CD4-positive, alpha-beta memory T cell (primary cell): ENCODE measurements at regions of chr15 and their contacts with region 1.

Region 1: GRCh38 chr15:76139368-76140073 is 79.7 kb downstream of the TMEM266 start:
- DNase-seq: peak; percentile 55 to 67 (median 60)
- H3K4me3 ChIP-seq: no peak overlapping the region
- H3K4me3 Mint-ChIP-seq: no peak overlapping the region
- H3K27ac ChIP-seq: no peak overlapping the region
- H3K27ac Mint-ChIP-seq: no peak overlapping the region
- H3K4me1 ChIP-seq: no peaks in the 10 kb centered on the region
- H3K4me1 Mint-ChIP-seq: peaks cover 0 to 5% (median under 1%) of the 10 kb centered on the region in 4 donors
- H3K27me3 ChIP-seq: no peaks in the 10 kb centered on the region
- H3K27me3 Mint-ChIP-seq: peaks cover 12 to 25% of the 10 kb centered on the region in 2 donors

Region 2: DNA sequence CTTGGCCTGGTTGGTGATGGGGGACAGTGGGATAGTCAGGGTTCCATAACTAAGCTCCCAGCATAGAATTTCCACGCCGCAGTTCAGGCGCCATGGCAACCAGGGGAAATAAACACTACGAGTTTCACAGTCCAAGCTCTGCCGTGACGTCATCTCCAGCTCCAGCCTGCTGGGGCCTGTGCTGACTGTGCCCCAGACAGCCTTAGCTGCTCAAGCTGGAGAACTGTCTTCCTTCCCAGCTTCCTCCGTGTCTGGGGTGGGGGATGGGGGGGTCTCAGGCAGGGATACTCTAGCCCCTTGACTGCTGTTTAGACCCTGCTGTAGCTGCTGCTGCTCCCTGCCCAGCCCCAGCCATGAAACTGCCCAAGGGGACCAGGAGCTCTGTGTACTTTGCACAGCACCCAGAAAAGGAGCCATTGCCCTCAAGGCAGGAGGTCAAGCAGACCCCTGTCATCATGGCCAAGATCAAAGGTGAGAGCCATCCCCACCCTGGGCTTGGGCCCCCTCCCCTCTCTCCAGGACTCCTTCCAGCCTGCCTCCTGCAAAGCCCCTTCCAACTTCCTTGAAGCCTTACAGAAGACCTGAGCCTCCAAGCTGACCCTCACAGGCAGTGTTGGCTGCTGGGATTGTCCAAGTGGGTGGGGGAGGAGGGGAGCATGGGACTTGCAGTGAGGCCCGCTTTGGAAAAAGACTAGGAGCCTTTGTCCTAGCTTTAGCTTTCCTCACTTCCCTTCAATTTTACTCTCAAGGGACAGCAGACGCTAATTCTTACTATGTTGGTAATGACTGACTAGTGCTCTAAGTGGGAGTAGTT is 415.5 kb before region 1 on chr15:
- CTCF ChIA-PET with region 1: interaction called, 3 read pairs
- POLR2A ChIA-PET with region 1: no interaction called
- intact Hi-C with region 1: loop called (anchors 2 kb)
- DNase-seq: peak; percentile 16 to 69 (median 25)
- H3K4me3 ChIP-seq: no peak overlapping the region
- H3K4me3 Mint-ChIP-seq: no peak overlapping the region
- H3K27ac ChIP-seq: no peak overlapping the region
- H3K27ac Mint-ChIP-seq: peak overlapping the region in 4 of 7 donors; percentile 16 to 83 (median 56)
- H3K4me1 ChIP-seq: no peaks in the 10 kb centered on the region
- H3K4me1 Mint-ChIP-seq: peaks cover 0 to 10% (median 1%) of the 10 kb centered on the region in 4 donors
- H3K27me3 ChIP-seq: no peaks in the 10 kb centered on the region
- H3K27me3 Mint-ChIP-seq: peaks cover 0 to 9% of the 10 kb centered on the region in 2 donors

Region 3: DNA sequence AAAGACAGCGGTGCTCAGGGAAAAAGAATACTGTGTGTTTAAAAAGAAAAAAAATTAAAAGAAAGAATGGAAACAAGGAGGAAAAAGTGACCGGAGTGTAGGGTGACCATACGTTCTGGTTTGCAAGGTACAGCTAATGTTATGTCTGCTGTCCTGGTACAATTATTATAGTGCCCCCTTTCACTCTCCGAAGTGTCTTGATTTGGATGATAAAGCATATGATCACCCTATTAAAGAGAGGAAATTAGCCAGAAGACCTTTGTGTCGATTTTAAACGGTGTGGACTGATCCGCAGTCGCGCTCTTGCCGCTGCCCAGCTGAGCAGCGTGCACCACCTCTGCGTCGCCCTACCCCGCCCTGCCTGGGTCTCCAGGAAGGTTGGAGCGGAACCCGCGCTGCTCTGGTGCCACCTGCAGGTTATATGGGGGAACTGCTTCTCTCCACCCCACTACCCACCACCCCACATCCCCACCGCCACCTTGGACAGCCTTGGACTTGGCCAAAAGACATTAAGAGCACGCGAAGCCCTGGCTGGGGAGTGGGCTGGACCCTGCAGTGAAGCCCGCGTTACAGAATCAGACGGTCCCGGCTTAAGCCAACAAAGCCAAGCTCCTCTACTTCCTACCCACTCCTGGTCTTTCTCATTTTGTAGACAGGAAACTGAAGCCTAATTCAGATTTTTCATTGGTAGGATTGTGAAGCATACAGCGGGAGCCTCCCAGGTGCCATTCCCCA is 337.5 kb before region 1 on chr15:
- CTCF ChIA-PET with region 1: interaction called, 3 read pairs
- POLR2A ChIA-PET with region 1: no interaction called
- intact Hi-C with region 1: loop called (anchors 2 kb)
- DNase-seq: peak; percentile 69 to 75 (median 72)
- H3K4me3 ChIP-seq: no peak overlapping the region
- H3K4me3 Mint-ChIP-seq: peak overlapping the region in 7 of 8 donors; percentile 46 to 79 (median 65)
- H3K27ac ChIP-seq: no peak overlapping the region
- H3K27ac Mint-ChIP-seq: peak overlapping the region in 1 of 7 donors; percentile 62
- H3K4me1 ChIP-seq: peaks cover 8% of the 10 kb centered on the region
- H3K4me1 Mint-ChIP-seq: peaks cover 2 to 8% (median 4%) of the 10 kb centered on the region in 4 donors
- H3K27me3 ChIP-seq: peaks cover 12% of the 10 kb centered on the region
- H3K27me3 Mint-ChIP-seq: peaks cover 28 to 35% of the 10 kb centered on the region in 2 donors

Region 4: DNA sequence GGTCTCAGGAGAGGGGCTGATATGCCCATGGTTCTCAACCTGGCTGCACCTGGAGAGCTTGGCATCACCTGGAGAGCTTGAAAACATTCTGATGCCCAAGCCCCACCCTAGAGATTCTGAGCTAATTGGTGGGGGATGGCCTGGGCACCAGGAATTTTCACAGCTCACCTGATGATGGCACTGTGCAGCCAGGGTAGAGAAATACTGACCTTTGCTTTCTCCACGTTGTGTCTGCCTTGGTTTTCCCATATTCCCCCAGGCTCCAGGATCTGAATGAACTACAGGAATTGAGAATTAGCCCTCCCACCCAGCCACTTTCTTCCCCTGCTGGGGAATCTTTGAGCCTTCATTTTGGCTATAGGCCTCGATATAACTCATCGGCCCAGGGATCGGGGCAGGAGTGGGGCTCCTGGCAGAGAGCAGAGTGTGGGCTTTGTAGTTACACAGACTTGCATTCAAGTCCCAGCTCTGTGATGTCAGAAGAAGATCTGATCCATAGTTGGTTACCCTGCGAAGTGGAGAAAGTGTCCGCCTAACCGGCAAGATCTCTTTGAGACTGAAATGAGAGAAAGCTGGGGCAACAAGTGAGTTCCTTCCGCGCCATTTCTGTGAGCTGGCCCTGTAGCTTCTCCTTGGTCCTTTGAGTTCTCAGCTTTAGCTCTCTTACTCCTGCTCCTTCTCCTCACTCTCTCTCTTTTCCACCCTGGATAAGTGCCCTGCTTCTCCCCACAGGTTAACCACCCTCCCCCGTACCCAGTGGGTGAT is 329.4 kb before region 1 on chr15:
- CTCF ChIA-PET with region 1: interaction called, 47 read pairs
- POLR2A ChIA-PET with region 1: no interaction called
- intact Hi-C with region 1: no loop called
- DNase-seq: peak in 3 of 5 donors; percentile 4 to 8 (median 6)
- H3K4me3 ChIP-seq: no peak overlapping the region
- H3K4me3 Mint-ChIP-seq: no peak overlapping the region
- H3K27ac ChIP-seq: no peak overlapping the region
- H3K27ac Mint-ChIP-seq: no peak overlapping the region
- H3K4me1 ChIP-seq: no peaks in the 10 kb centered on the region
- H3K4me1 Mint-ChIP-seq: no peaks in the 10 kb centered on the region
- H3K27me3 ChIP-seq: no peaks in the 10 kb centered on the region
- H3K27me3 Mint-ChIP-seq: peaks cover 0 to 6% of the 10 kb centered on the region in 2 donors

Region 5: DNA sequence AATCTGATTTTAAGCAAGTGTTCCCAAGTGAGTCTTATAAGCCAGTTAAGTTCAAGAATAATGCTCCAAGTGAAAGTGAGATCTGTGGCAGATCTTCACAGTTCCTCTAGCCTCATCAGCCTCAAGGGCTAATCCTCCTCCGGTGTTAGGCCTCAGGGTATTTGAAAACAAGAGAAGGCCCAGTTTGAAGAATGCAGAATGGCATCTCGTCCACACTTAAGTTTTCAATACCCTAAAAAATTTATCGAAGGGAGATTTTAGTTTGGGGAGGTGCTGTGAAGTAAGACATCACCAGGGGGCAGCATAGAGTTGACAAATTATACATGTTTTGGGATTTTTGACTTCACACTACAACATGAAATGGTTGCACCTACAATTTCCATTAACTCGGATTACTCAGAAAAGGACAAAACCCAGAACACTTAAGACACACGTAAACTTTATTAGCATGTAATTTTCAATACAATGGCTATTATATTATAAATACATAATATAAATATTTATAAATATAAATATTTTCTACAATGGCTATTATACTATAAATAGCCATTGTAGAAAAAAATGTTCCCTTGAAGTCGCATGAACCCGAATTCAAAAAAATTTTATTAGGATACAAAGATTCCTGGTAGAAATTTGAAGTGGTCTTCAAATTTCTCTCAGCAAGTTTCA is 82.1 kb before region 1 on chr15:
- CTCF ChIA-PET with region 1: interaction called, 99 read pairs
- POLR2A ChIA-PET with region 1: interaction called, 3 read pairs
- intact Hi-C with region 1: loop called (anchors 1 kb)
- DNase-seq: peak in 4 of 5 donors; percentile 33 to 41 (median 34)
- H3K4me3 ChIP-seq: no peak overlapping the region
- H3K4me3 Mint-ChIP-seq: peak overlapping the region in 6 of 8 donors; percentile 32 to 59 (median 48)
- H3K27ac ChIP-seq: no peak overlapping the region
- H3K27ac Mint-ChIP-seq: no peak overlapping the region
- H3K4me1 ChIP-seq: peaks cover 24% of the 10 kb centered on the region
- H3K4me1 Mint-ChIP-seq: peaks cover 5 to 27% (median 16%) of the 10 kb centered on the region in 4 donors
- H3K27me3 ChIP-seq: peaks cover 29% of the 10 kb centered on the region
- H3K27me3 Mint-ChIP-seq: peaks cover 37 to 47% of the 10 kb centered on the region in 2 donors

Region 6: GRCh38 chr15:76127880-76128279 is 11.6 kb before region 1 on chr15:
- CTCF ChIA-PET with region 1: interaction called, 14 read pairs
- POLR2A ChIA-PET with region 1: no interaction called
- intact Hi-C with region 1: no loop called
- DNase-seq: no peak
- H3K4me3 ChIP-seq: no peak overlapping the region
- H3K4me3 Mint-ChIP-seq: no peak overlapping the region
- H3K27ac ChIP-seq: no peak overlapping the region
- H3K27ac Mint-ChIP-seq: no peak overlapping the region
- H3K4me1 ChIP-seq: no peaks in the 10 kb centered on the region
- H3K4me1 Mint-ChIP-seq: no peaks in the 10 kb centered on the region
- H3K27me3 ChIP-seq: no peaks in the 10 kb centered on the region
- H3K27me3 Mint-ChIP-seq: peaks cover 10 to 21% of the 10 kb centered on the region in 2 donors

Region 7: GRCh38 chr15:76150971-76151598 is 11.6 kb after region 1 on chr15:
- CTCF ChIA-PET with region 1: interaction called, 81 read pairs
- POLR2A ChIA-PET with region 1: no interaction called
- intact Hi-C with region 1: no loop called
- DNase-seq: peak; percentile 50 to 62 (median 60)
- H3K4me3 ChIP-seq: no peak overlapping the region
- H3K4me3 Mint-ChIP-seq: no peak overlapping the region
- H3K27ac ChIP-seq: no peak overlapping the region
- H3K27ac Mint-ChIP-seq: no peak overlapping the region
- H3K4me1 ChIP-seq: peaks cover 4% of the 10 kb centered on the region
- H3K4me1 Mint-ChIP-seq: peaks cover 4 to 8% (median 7%) of the 10 kb centered on the region in 4 donors
- H3K27me3 ChIP-seq: no peaks in the 10 kb centered on the region
- H3K27me3 Mint-ChIP-seq: peaks cover 0 to 6% of the 10 kb centered on the region in 2 donors